CD8-positive, alpha-beta T cell (primary cell): ENCODE measurements at regions of chr9 and their contacts with region 1.

Region 1: DNA sequence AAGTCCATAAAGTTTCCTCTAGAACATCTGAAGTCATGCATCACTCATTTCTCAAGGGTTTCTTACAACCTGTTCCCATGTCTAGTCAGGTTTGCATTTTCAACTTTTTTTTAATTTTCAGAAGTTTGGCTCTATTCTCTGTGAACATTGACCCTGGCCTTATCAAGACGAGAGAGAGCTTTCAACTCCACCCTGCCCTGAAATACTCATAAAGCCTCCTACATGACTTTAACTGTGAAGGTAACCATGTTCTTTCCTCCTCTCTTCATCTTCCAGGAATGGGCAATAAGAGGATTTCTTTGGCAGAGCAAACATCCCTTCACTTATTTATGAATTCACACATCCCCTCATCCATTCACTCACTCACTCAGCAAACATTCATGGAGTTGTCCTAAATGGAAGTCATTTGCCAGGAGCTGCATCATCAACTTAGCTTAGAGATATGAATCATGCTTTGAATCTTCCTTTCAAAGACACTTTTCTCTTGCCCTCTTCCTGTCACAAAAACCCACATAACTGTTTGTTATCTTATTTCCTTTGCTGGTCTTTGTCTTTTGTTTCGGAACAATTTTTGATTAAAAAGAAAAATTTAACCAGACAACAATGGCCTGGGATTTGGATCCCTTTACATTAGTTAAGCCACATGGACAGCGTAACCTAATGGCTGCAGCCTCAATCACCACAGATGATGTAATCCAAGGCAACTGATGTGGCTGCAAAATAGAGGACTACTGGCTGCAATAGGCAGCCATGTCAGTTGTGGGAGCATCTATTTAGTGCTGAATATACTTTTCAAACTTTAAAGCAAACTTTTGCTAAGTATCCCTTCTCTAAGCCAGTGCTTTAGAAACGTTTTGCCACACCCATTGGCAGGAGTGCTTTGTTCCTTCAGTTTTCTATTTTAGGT is 43.0 kb upstream of the GNAQ start:
- DNase-seq: peak in 2 of 9 experiments; percentile 39 to 57
- ATAC-seq: peak; percentile 36
- H3K4me3 ChIP-seq: peak overlapping the region in 1 of 2 experiments; percentile 7
- H3K4me3 Mint-ChIP-seq: peak overlapping the region; percentile 66
- H3K27ac ChIP-seq: peak overlapping the region; percentile 1 to 44
- H3K27ac Mint-ChIP-seq: peak overlapping the region; percentile 76
- H3K4me1 ChIP-seq: peaks cover 36% of the 10 kb centered on the region
- H3K4me1 Mint-ChIP-seq: peaks cover 49% of the 10 kb centered on the region
- H3K27me3 ChIP-seq: no peaks in the 10 kb centered on the region
- H3K27me3 Mint-ChIP-seq: no peaks in the 10 kb centered on the region
- CTCF ChIP-seq: no peak

Region 2: DNA sequence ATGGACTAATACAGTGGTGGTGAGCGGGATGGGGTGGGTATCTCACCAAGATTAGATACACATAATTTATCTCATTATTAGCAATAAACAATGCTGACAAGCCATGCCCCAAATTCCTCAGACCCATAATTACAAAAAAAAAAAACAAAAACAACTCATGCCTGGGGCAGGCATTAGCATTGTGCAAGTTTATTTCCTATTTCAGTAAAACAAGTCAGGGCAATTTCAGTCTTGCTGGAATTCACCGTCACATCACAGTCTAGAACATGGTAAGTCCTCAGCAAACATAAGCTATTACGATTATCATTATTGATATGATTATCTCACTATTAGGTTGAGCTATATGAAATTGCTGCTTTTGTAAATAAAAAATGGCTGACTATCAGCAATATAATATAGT is 14.5 kb after region 1 on chr9:
- CTCF ChIA-PET with region 1: interaction called, 5 read pairs
- POLR2A ChIA-PET with region 1: no interaction called
- intact Hi-C with region 1: loop called in 1 of 2 experiments (anchors 1 kb)
- DNase-seq: no peak
- ATAC-seq: no peak
- H3K4me3 ChIP-seq: no peak overlapping the region
- H3K4me3 Mint-ChIP-seq: no peak overlapping the region
- H3K27ac ChIP-seq: no peak overlapping the region
- H3K27ac Mint-ChIP-seq: no peak overlapping the region
- H3K4me1 ChIP-seq: no peaks in the 10 kb centered on the region
- H3K4me1 Mint-ChIP-seq: no peaks in the 10 kb centered on the region
- H3K27me3 ChIP-seq: no peaks in the 10 kb centered on the region
- H3K27me3 Mint-ChIP-seq: no peaks in the 10 kb centered on the region
- CTCF ChIP-seq: no peak

Region 3: DNA sequence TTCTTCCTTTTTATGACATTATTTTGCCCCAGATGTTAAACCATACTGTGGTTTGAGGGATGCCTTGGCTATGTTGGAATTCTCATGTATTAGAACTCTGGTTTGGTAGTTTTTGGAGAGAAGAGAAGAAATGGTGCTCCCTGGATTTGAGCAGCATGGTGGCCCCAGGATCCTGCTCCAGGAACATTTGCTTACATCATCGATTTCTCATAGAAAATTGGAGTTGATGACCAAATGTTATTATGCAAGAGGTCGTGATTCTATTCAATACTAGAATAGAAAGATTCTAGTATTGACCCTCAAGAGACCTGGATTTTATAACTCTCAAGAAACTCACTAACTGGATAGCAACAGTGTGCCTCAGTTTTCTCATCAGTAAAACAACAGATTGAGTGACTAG is 34.4 kb after region 1 on chr9:
- CTCF ChIA-PET with region 1: no interaction called
- POLR2A ChIA-PET with region 1: no interaction called
- intact Hi-C with region 1: loop called in 1 of 2 experiments (anchors 5 kb)
- DNase-seq: no peak
- ATAC-seq: no peak
- H3K4me3 ChIP-seq: no peak overlapping the region
- H3K4me3 Mint-ChIP-seq: no peak overlapping the region
- H3K27ac ChIP-seq: no peak overlapping the region
- H3K27ac Mint-ChIP-seq: no peak overlapping the region
- H3K4me1 ChIP-seq: peaks cover 5% of the 10 kb centered on the region
- H3K4me1 Mint-ChIP-seq: peaks cover 32% of the 10 kb centered on the region
- H3K27me3 ChIP-seq: no peaks in the 10 kb centered on the region
- H3K27me3 Mint-ChIP-seq: no peaks in the 10 kb centered on the region
- CTCF ChIP-seq: no peak

Region 4: DNA sequence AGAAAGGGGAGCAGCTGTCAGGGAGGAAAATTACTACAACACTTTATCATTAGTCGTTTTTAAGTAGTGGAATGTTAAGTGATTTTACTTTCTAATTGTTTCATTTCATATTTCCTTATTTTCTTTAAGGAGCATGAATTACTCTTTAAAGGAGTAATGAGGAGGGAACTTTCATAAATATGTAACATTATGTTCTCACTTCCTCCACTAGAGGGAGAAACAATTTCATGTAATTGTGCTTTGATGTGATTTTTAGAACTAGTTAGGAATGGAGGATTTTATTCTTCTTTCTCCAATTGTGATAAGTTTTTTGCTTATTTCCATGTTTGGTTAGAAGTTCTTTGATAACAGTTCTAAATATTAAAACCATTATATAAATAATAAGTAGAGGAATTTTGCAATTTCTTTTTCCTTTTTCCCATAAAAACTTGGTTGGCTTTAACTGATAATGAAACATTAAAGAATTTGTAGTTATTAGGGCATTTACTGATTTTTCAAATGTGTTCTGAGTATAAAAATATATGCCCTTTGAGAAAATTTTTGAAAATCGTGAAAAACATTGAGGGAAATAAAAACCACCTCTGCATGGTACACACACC is 186.9 kb after region 1 on chr9:
- CTCF ChIA-PET with region 1: no interaction called
- POLR2A ChIA-PET with region 1: no interaction called
- intact Hi-C with region 1: no loop called
- DNase-seq: peak in 2 of 9 experiments; percentile 33 to 53
- ATAC-seq: peak; percentile 36
- H3K4me3 ChIP-seq: no peak overlapping the region
- H3K4me3 Mint-ChIP-seq: no peak overlapping the region
- H3K27ac ChIP-seq: no peak overlapping the region
- H3K27ac Mint-ChIP-seq: no peak overlapping the region
- H3K4me1 ChIP-seq: no peaks in the 10 kb centered on the region
- H3K4me1 Mint-ChIP-seq: no peaks in the 10 kb centered on the region
- H3K27me3 ChIP-seq: no peaks in the 10 kb centered on the region
- H3K27me3 Mint-ChIP-seq: no peaks in the 10 kb centered on the region
- CTCF ChIP-seq: peak; percentile 80